Esophagus muscularis mucosa (tissue), 4 donors: ENCODE measurements at regions of chr7 and their contacts with region 1.

Region 1: GRCh38 chr7:55255496-55256435 is 109.4 kb upstream of the LANCL2 start:
- DNase-seq: no peak
- H3K4me3 ChIP-seq: peak overlapping the region; percentile 65 to 78 (median 70)
- H3K27ac ChIP-seq: peak overlapping the region; percentile 55 to 77 (median 72)
- H3K4me1 ChIP-seq: peaks cover 17 to 21% (median 19%) of the 10 kb centered on the region in 4 donors
- H3K27me3 ChIP-seq: peaks cover 0 to 24% (median 0%) of the 10 kb centered on the region in 4 donors
- CTCF ChIP-seq: peak; percentile 87 to 93 (median 92)
- EP300 ChIP-seq: no peak
- POLR2A ChIP-seq: no peak

Region 2: DNA sequence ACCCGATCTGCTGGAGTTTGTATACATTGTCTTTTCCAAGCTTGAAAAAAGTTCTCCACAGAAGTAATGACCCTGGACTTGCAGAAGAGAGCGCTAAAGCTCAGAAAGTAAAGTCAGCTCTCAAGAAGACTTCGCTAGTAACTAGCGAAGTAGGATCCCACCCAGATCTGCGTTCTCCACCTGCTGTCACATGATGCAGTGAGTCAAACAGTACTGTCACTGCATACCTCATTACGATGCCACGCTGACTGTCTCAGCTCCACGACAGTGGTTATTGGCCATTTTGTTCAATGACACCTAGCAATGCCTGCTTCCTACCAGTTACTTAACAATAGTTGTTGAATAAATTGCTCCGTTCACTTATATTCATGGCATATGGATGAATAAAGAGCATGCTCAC is 467.1 kb before region 1 on chr7:
- intact Hi-C with region 1: loop called (anchors 5 kb)
- DNase-seq: no peak
- H3K4me3 ChIP-seq: peak overlapping the region in 1 of 4 donors; percentile 10
- H3K27ac ChIP-seq: no peak overlapping the region
- H3K4me1 ChIP-seq: peaks cover 4 to 10% (median 8%) of the 10 kb centered on the region in 4 donors
- H3K27me3 ChIP-seq: no peaks in the 10 kb centered on the region
- CTCF ChIP-seq: peak; percentile 71 to 80 (median 74)
- EP300 ChIP-seq: no peak
- POLR2A ChIP-seq: no peak

Region 3: GRCh38 chr7:55192718-55193117 is 63.0 kb before region 1 on chr7:
- intact Hi-C with region 1: loop called (anchors 5 kb)
- DNase-seq: no peak
- H3K4me3 ChIP-seq: no peak overlapping the region
- H3K27ac ChIP-seq: peak overlapping the region; percentile 57 to 72 (median 60)
- H3K4me1 ChIP-seq: peaks cover 26 to 61% (median 52%) of the 10 kb centered on the region in 4 donors
- H3K27me3 ChIP-seq: no peaks in the 10 kb centered on the region
- CTCF ChIP-seq: no peak
- EP300 ChIP-seq: no peak
- POLR2A ChIP-seq: no peak